B cell (primary cell): ENCODE measurements at regions of chr3 and their contacts with region 1.

Region 1: GRCh38 chr3:133475245-133476010 is 75.6 kb downstream of the BFSP2 start:
- DNase-seq: peak; percentile 81
- ATAC-seq: peak; percentile 73
- H3K4me3 ChIP-seq: peak overlapping the region in 1 of 5 experiments; percentile 25
- H3K4me3 Mint-ChIP-seq: peak overlapping the region; percentile 81
- H3K27ac ChIP-seq: peak overlapping the region; percentile 75 to 82
- H3K27ac Mint-ChIP-seq: peak overlapping the region; percentile 87
- H3K4me1 ChIP-seq: peaks cover 59 to 74% of the 10 kb centered on the region in 2 donors
- H3K4me1 Mint-ChIP-seq: peaks cover 72% of the 10 kb centered on the region
- H3K27me3 ChIP-seq: no peaks in the 10 kb centered on the region
- H3K27me3 Mint-ChIP-seq: no peaks in the 10 kb centered on the region
- CTCF ChIP-seq: no peak

Region 2: DNA sequence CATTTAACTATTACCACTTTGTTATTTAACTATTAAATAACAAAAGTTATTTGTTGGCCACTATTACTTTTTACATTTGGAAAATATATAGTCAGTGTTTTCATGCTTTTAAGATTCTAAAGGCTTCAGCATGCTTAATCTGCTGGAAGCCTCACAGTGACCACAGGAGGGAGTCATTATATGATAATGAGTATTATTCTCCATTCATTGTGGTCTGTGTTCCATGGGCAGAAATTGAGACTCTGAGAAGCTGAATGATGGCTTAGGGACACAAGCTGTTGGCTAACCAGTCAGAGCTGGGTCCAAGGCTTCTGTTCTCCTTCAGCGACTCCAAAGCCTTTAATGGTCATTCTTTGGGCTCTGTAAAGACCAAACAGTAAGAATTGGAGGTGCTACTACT is 10.9 kb before region 1 on chr3:
- CTCF ChIA-PET with region 1: interaction called, 5 read pairs
- POLR2A ChIA-PET with region 1: no interaction called
- intact Hi-C with region 1: loop called (anchors 1 kb)
- DNase-seq: no peak
- ATAC-seq: no peak
- H3K4me3 ChIP-seq: no peak overlapping the region
- H3K4me3 Mint-ChIP-seq: no peak overlapping the region
- H3K27ac ChIP-seq: no peak overlapping the region
- H3K27ac Mint-ChIP-seq: peak overlapping the region; percentile 41
- H3K4me1 ChIP-seq: peaks cover 53 to 62% of the 10 kb centered on the region in 2 donors
- H3K4me1 Mint-ChIP-seq: peaks cover 61% of the 10 kb centered on the region
- H3K27me3 ChIP-seq: no peaks in the 10 kb centered on the region
- H3K27me3 Mint-ChIP-seq: no peaks in the 10 kb centered on the region
- CTCF ChIP-seq: peak; percentile 37

Region 3: DNA sequence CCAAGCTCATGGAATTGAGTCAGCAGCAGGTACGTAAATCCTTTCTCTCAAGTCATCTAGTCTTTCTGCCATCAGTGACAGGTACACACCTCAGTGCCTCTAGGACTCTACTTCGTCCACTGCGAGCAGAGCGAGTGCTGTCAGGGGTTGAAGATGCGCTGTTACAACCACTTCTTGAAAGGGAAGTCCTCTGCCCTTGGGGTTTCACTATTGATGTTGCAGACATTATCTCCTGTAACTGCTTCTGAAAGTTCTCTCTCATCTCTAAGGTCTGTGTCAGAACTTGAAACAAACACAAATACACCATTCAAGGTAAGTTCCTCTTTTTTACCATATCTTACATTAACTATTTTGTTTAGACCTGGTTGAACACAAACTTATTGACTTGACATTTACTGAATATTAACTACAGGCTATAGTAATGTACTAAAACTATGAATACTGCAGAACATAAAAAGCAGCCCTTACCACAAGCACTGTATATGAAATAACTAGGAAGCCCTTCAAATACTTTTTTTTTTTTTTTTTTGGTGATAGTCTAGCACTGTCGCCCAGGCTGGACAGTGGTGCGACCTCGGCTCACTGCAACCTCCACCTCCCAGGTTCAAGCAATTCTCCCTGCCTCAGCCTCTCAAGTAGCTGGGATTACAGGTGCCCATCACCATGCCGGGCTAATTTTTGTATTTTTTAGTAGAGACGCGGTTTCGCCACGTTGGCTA is 144.8 kb after region 1 on chr3:
- CTCF ChIA-PET with region 1: no interaction called
- POLR2A ChIA-PET with region 1: no interaction called
- intact Hi-C with region 1: loop called (anchors 5 kb)
- DNase-seq: peak; percentile 77
- ATAC-seq: peak; percentile 97
- H3K4me3 ChIP-seq: no peak overlapping the region
- H3K4me3 Mint-ChIP-seq: peak overlapping the region; percentile 52
- H3K27ac ChIP-seq: peak overlapping the region; percentile 33 to 59
- H3K27ac Mint-ChIP-seq: peak overlapping the region; percentile 83
- H3K4me1 ChIP-seq: peaks cover 0 to 12% of the 10 kb centered on the region in 2 donors
- H3K4me1 Mint-ChIP-seq: peaks cover 13% of the 10 kb centered on the region
- H3K27me3 ChIP-seq: no peaks in the 10 kb centered on the region
- H3K27me3 Mint-ChIP-seq: no peaks in the 10 kb centered on the region
- CTCF ChIP-seq: no peak